ENCODE measurements at regions of chrX and their contacts with region 1.

Region 1: GRCh38 chrX:150759568-150760416 is 66.6 kb downstream of the MTMR1 start:
- DNase-seq: no peak
- H3K4me3 ChIP-seq: no peak overlapping the region
- H3K27ac ChIP-seq: no peak overlapping the region
- H3K4me1 ChIP-seq: no peaks in the 10 kb centered on the region
- H3K27me3 ChIP-seq: no peaks in the 10 kb centered on the region
- CTCF ChIP-seq: no peak

Region 2: DNA sequence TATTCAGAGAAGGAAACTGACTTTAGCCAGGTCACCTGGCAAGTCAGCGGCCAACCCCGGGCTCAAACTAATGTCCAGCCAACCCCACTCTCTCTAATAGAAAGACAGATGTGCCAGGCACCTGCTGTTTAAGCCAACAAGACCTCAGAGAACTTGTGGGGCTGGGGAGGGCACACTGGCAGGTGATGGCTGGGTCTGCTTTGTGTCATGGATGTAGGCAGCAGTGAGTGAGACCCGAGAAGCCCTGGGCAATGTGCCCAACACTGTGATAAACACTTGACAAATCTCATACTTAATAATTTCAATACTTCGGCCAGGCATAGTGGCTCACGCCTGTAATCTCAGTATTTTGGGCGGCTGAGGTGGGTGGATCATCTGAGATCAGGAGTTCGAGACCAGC is 147.7 kb after region 1 on chrX:
- CTCF ChIA-PET with region 1: no interaction called
- dilution Hi-C with region 1: loop called (anchors 5 kb)
- in situ Hi-C with region 1: no loop called
- intact Hi-C with region 1: no loop called
- DNase-seq: no peak
- H3K4me3 ChIP-seq: no peak overlapping the region
- H3K27ac ChIP-seq: no peak overlapping the region
- H3K4me1 ChIP-seq: no peaks in the 10 kb centered on the region
- H3K27me3 ChIP-seq: no peaks in the 10 kb centered on the region
- CTCF ChIP-seq: no peak

Region 3: DNA sequence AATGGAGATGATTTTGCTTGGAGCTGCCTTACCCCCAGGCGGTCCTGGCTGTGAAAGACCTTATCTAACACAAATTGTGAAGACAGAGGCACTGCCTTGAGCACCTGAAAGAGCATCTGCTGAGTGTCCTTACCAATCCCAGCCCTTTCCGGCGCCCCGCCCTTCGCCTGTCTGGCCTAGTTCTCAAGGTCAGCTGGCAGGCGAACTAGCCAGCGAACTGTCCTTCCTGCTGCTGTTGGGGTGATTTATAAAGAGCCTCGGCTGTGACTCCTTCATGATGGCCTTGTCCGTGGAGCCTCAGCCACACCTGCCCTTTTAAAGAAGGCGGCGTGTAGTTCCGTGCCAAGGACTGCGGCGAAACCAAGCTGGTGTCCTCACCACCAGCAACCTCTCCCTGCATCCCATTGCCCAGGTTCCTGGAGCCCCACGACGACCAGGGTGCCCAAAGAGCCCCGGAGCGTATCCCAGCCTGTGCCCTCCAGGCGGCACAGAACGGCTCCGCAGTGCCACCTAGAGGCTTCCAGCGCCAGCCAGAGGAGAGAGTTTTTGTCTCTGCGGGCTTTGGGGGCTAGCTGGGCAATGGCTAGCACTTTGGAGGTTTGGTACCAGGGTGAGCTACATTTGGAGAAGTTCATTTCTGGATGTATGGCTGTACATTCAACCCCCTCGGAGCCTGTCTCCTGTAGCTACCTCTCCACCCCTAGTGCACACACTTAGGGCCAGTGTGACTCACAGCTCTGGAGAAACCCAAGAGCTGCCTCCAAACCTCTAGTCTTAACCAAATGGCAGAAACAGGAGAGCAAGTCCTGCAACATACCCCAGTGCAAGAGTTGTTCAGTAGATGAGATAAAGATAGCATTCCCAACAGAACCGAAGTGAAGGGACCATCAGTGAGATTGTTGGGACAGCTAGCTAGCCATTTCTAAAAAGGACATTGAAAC is 600.4 kb after region 1 on chrX:
- CTCF ChIA-PET with region 1: interaction called, 16 read pairs
- dilution Hi-C with region 1: no loop called
- in situ Hi-C with region 1: no loop called
- intact Hi-C with region 1: no loop called
- DNase-seq: peak; percentile 2
- H3K4me3 ChIP-seq: no peak overlapping the region
- H3K27ac ChIP-seq: no peak overlapping the region
- H3K4me1 ChIP-seq: no peaks in the 10 kb centered on the region
- H3K27me3 ChIP-seq: no peaks in the 10 kb centered on the region
- CTCF ChIP-seq: peak; percentile 46 to 73

Measured in mammary epithelial cell (primary cell).